Left ventricle myocardium superior (tissue), 1 donor: ENCODE measurements at regions of chr16 and their contacts with region 1.

Region 1: DNA sequence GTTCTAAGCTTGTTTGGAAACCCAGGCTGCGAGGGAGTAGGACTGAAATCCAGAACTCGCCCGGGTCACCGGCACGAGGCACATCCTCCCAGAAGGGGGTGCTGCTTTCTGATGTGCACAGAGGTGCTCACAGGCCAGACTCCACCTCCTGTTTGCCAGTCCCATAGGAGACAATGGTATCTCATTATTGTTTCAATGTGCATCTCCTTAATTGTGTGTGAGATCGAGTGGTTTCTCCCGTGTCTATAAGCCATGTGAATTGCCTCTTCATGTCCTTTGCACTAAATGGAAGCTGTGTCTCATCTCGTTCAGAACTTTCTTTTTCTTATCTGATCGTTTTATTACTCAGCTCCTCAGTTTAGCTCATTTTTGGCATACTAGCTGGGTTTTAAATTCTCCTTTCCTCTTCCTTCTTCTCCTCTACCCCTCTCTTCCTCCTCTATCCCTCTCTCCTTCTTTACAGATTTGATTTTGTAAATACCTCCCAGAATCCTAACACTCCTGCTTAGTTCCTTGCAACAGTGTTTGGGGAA is 32.1 kb upstream of the PRKCB start:
- DNase-seq: peak; percentile 44
- ATAC-seq: peak; percentile 37

Region 2: DNA sequence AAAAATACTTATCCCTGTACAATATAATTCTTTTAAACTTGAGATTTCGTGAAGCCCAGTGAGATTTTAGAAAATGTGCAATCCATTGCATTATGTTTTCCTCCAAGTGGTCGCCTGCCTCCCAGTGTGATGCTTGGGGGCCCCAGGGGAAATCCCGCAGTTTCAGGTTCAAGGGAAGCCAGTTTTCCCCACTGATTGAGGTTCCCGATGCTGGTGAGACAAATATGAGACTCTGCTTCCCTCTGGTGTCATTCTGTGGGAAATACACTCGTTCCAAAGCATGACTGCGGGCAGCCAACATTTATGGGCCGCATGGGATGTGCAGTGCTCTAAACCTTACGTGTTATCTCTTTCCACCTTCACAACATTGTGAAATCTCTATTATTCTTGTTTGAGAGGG is 233.0 kb after region 1 on chr16:
- intact Hi-C with region 1: loop called (anchors 10 kb)
- DNase-seq: no peak
- ATAC-seq: peak; percentile 49